HepG2 (cell line): ENCODE measurements at regions of chr5 and their contacts with region 1.

Region 1: GRCh38 chr5:151115274-151115905 is 34.6 kb upstream of the TNIP1 start:
- DNase-seq: peak; percentile 32
- ATAC-seq: peak; percentile 81
- H3K4me3 ChIP-seq: no peak overlapping the region
- H3K27ac ChIP-seq: no peak overlapping the region
- H3K4me1 ChIP-seq: no peaks in the 10 kb centered on the region
- H3K27me3 ChIP-seq: no peaks in the 10 kb centered on the region; a peak in 1 of 5 replicates
- CTCF ChIP-seq: peak; percentile 92
- EP300 ChIP-seq: no peak
- POLR2A ChIP-seq: no peak
- RAD21 ChIP-seq: peak; percentile 77

Region 2: DNA sequence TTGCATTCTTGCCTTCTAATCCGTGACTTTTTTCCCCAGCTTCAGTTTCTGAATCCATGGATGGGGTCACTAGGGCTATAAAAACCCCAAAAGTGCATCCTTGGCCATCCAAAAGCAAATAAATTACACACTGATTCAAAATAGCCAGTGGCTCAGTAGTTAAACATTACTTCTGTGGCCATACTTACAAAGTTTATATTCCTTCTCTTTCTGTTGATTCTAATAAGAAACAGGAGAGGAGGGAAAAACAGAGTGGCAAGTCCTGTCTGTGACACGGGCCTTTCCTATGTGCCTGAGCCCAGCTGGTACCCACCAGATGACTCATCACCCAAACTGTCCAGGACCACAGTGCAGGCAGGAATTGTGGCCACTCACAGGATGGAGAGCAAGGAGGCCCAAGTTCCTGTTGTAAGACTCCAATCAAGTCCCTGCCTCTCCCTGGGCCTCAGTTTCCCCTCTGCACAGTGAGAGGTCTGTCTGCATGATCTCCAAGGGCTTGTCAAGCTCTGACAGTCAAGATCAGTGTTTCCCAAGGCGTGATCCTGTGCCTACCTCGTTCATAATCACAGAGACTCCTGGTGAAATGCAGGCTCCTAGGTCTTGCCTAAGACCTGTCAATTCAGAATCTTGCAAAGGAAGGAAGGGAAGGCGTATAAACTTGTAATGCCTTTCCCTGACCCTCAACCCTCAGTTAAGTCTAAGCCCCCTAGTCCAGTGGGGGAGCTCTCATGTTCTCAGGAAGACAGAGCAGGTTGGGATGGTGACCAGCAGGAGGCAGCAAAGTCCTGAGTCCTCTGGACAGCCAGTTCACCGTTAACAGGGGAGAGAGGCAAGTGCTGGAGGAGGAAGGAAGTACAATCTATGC is 64.1 kb before region 1 on chr5:
- CTCF ChIA-PET with region 1: interaction called, 62 read pairs
- POLR2A ChIA-PET with region 1: interaction called, 5 read pairs
- in situ Hi-C with region 1: loop called (anchors 5 kb)
- intact Hi-C with region 1: loop called (anchors 1 kb)
- DNase-seq: peak; percentile 68
- ATAC-seq: peak; percentile 91
- H3K4me3 ChIP-seq: no peak overlapping the region
- H3K27ac ChIP-seq: no peak overlapping the region
- H3K4me1 ChIP-seq: no peaks in the 10 kb centered on the region
- H3K27me3 ChIP-seq: no peaks in the 10 kb centered on the region
- CTCF ChIP-seq: peak; percentile 88
- EP300 ChIP-seq: no peak
- POLR2A ChIP-seq: no peak
- RAD21 ChIP-seq: peak; percentile 83

Region 3: GRCh38 chr5:151080623-151081430 is 34.6 kb before region 1 on chr5 and contains the start of gene TNIP1:
- CTCF ChIA-PET with region 1: no interaction called
- POLR2A ChIA-PET with region 1: interaction called, 3 read pairs
- in situ Hi-C with region 1: no loop called
- intact Hi-C with region 1: loop called (anchors 1 kb)
- DNase-seq: peak; percentile 81
- ATAC-seq: peak; percentile 94
- H3K4me3 ChIP-seq: peak within 1 kb of the TSS; percentile 89 to 96 (median 92)
- H3K27ac ChIP-seq: peak within 1 kb of the TSS; percentile 94
- H3K4me1 ChIP-seq: peaks cover 76% of the 10 kb centered on the region
- H3K27me3 ChIP-seq: no peaks in the 10 kb centered on the region; a peak in 1 of 5 replicates
- CTCF ChIP-seq: peak; percentile 18; the same call in 1 of the 2 replicates
- EP300 ChIP-seq: no peak
- POLR2A ChIP-seq: peak; percentile 38 to 68; a peak in 3 of 4 replicates
- RAD21 ChIP-seq: no peak; the same call in 1 of the 2 replicates
- total RNA-seq, gene TNIP1: 26.2 and 29.8 TPM in 2 replicates

Region 4: GRCh38 chr5:151093476-151093889 is 21.9 kb before region 1 on chr5:
- CTCF ChIA-PET with region 1: no interaction called
- POLR2A ChIA-PET with region 1: no interaction called
- in situ Hi-C with region 1: no loop called
- intact Hi-C with region 1: no loop called
- DNase-seq: no peak
- ATAC-seq: no peak; the same call in 2 of the 3 replicates
- H3K4me3 ChIP-seq: no peak overlapping the region
- H3K27ac ChIP-seq: peak overlapping the region; percentile 14
- H3K4me1 ChIP-seq: peaks cover 49% of the 10 kb centered on the region
- H3K27me3 ChIP-seq: no peaks in the 10 kb centered on the region; a peak in 1 of 5 replicates
- CTCF ChIP-seq: no peak
- EP300 ChIP-seq: no peak
- POLR2A ChIP-seq: no peak
- RAD21 ChIP-seq: no peak